ENCODE measurements at regions of chr11 and their contacts with region 1.

Region 1: DNA sequence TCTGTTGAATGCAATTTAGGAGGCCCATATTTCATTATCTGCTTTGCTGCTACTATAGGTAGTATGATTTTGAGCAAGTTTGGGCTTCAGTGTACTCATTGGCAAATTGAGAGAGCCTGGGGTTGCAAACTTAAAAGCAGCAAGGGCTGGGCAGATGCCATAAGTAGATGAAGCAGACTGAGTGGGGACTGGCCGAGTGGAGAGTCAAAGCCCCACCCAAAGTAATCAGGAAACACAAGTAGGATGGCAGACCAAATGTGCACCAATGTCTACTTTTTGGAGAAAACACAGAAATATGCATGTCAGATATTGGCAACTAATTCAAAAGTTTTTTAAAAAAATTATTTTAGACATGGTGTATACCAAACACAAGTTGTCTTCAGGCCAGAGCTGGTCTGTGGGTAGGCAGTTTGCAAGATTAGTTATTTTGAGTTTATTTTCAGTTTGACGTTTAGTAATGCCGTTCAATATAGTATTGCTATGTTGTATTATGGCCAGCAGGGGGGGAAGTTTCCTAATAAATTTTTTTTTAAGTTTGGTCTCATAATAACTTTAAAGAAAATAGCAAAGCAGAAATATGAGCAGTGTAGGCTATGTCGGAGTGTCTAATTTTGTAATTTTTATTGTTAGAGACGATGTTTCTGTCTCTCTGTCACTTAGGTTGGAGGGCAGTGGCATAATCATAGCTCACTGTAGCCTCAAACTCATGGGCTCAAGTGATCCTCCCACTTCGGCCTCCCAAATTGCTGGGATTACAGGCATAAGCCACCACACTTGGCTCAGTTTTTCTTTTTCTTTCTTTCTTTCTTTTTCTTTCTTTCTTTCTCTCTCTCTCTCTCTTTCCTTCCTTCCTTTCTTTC is 105.1 kb downstream of the HIPK3 start:
- DNase-seq: no peak
- ATAC-seq: peak; percentile 60
- H3K4me3 Mint-ChIP-seq: no peak overlapping the region
- H3K27ac Mint-ChIP-seq: no peak overlapping the region
- H3K4me1 Mint-ChIP-seq: peaks cover 2% of the 10 kb centered on the region
- H3K27me3 Mint-ChIP-seq: peaks cover 18% of the 10 kb centered on the region

Region 2: GRCh38 chr11:33147559-33147958 is 214.7 kb before region 1 on chr11:
- CTCF ChIA-PET with region 1: no interaction called
- DNase-seq: no peak
- ATAC-seq: no peak
- H3K4me3 Mint-ChIP-seq: no peak overlapping the region
- H3K27ac Mint-ChIP-seq: no peak overlapping the region
- H3K4me1 Mint-ChIP-seq: peaks cover 6% of the 10 kb centered on the region
- H3K27me3 Mint-ChIP-seq: no peaks in the 10 kb centered on the region

Region 3: GRCh38 chr11:33291004-33291777 is 71.1 kb before region 1 on chr11:
- CTCF ChIA-PET with region 1: no interaction called
- DNase-seq: no peak
- ATAC-seq: no peak
- H3K4me3 Mint-ChIP-seq: no peak overlapping the region
- H3K27ac Mint-ChIP-seq: no peak overlapping the region
- H3K4me1 Mint-ChIP-seq: peaks cover 3% of the 10 kb centered on the region
- H3K27me3 Mint-ChIP-seq: no peaks in the 10 kb centered on the region

Region 4: GRCh38 chr11:33463059-33463458 is 100.8 kb after region 1 on chr11:
- CTCF ChIA-PET with region 1: no interaction called
- DNase-seq: no peak
- ATAC-seq: no peak
- H3K4me3 Mint-ChIP-seq: no peak overlapping the region
- H3K27ac Mint-ChIP-seq: no peak overlapping the region
- H3K4me1 Mint-ChIP-seq: no peaks in the 10 kb centered on the region
- H3K27me3 Mint-ChIP-seq: peaks cover 14% of the 10 kb centered on the region

Region 5: GRCh38 chr11:33742249-33742851 is 380.1 kb after region 1 on chr11:
- CTCF ChIA-PET with region 1: interaction called, 13 read pairs
- DNase-seq: no peak
- ATAC-seq: no peak
- H3K4me3 Mint-ChIP-seq: no peak overlapping the region
- H3K27ac Mint-ChIP-seq: no peak overlapping the region
- H3K4me1 Mint-ChIP-seq: no peaks in the 10 kb centered on the region
- H3K27me3 Mint-ChIP-seq: peaks cover 8% of the 10 kb centered on the region

Measured in activated CD8-positive, alpha-beta memory T cell treated with anti-CD3 and anti-CD28 coated beads, Interleukin-2, amount 10 ng/mL, durations not matched to agents 7 days and 5 days (primary cell).